Activated CD4-positive, alpha-beta T cell treated with anti-CD3 and anti-CD28 coated beads, Interleukin-2, amount 10 ng/mL, durations not matched to agents 24 days and 14 days (primary cell): ENCODE measurements at regions of chr13 and their contacts with region 1.

Region 1: GRCh38 chr13:45393941-45394570 is 24.1 kb downstream of the SLC25A30 start:
- DNase-seq: peak; percentile 71
- H3K4me3 Mint-ChIP-seq: no peak overlapping the region
- H3K27ac Mint-ChIP-seq: no peak overlapping the region
- H3K4me1 Mint-ChIP-seq: peaks cover 38% of the 10 kb centered on the region
- H3K27me3 Mint-ChIP-seq: no peaks in the 10 kb centered on the region

Region 2: GRCh38 chr13:45055198-45055901 is 338.7 kb before region 1 on chr13:
- intact Hi-C with region 1: loop called (anchors 10 kb)
- DNase-seq: peak; percentile 73
- H3K4me3 Mint-ChIP-seq: peak overlapping the region; percentile 31
- H3K27ac Mint-ChIP-seq: peak overlapping the region; percentile 57
- H3K4me1 Mint-ChIP-seq: peaks cover 18% of the 10 kb centered on the region
- H3K27me3 Mint-ChIP-seq: peaks cover 43% of the 10 kb centered on the region

Region 3: GRCh38 chr13:45332036-45332830 is 61.8 kb before region 1 on chr13:
- intact Hi-C with region 1: loop called (anchors 1 kb)
- DNase-seq: no peak
- H3K4me3 Mint-ChIP-seq: no peak overlapping the region
- H3K27ac Mint-ChIP-seq: no peak overlapping the region
- H3K4me1 Mint-ChIP-seq: peaks cover 75% of the 10 kb centered on the region
- H3K27me3 Mint-ChIP-seq: no peaks in the 10 kb centered on the region

Region 4: DNA sequence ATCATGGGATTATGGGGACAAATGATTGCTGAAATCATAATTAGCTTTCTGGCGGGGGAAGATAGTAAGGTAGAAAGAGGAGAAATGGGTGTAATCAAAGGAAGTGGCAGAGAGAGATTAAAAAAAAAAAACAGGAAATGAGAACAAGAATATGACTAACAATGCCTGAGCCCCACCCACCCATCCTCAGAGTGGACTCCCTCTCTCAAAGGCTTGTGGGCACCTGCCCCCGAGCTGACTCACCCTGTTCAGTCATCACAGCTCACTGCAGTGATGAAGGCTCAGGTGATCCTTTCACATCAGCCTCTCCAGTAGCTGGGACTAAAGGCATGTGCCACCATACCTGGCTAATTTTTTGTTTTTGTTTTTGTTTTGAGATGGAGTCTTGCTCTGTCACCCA is 26.7 kb before region 1 on chr13:
- intact Hi-C with region 1: loop called (anchors 1 kb)
- DNase-seq: peak; percentile 95
- H3K4me3 Mint-ChIP-seq: peak overlapping the region; percentile 76
- H3K27ac Mint-ChIP-seq: peak overlapping the region; percentile 95
- H3K4me1 Mint-ChIP-seq: peaks cover 54% of the 10 kb centered on the region
- H3K27me3 Mint-ChIP-seq: no peaks in the 10 kb centered on the region

Region 5: DNA sequence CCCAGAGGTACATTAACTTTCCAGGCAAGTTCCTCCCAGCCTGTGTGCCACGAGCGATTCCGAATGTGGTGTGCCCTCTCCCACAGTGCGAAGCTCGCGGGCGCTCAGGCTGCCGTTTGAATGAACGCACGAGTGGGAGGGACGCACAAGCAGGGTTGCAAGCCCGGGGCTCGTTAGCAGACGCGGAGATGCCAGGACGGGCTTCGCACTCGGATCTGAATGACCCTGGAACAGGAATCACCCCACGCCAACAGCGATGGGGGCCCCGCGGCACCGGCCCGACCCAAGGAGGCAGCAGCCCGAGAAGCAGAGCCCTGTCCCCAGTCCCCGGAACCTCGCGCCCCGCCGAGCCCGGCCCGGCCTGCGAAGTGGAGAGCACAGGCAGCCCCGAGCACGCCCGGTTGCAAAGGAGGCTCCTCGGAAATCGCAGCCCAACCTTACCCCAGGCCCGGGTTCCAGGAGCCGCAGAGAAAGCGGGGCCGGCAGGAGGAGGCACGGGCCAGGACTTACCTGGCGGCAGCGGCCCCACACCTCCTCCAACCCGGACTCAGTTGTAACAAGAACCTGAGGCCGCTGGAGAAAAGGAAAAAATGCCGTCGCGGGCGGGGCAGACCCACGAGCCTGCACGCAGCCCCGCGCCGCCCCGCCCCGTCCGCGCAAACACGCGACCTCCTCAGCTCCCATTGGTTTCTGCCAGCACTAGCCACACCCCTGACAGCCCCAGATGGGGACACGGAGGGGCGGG is 23.9 kb after region 1 on chr13 and contains the start of gene SLC25A30:
- intact Hi-C with region 1: loop called (anchors 2 kb)
- DNase-seq: peak; percentile 96
- H3K4me3 Mint-ChIP-seq: peak within 1 kb of the TSS; percentile 96
- H3K27ac Mint-ChIP-seq: peak within 1 kb of the TSS; percentile 94
- H3K4me1 Mint-ChIP-seq: peaks cover 19% of the 10 kb centered on the region
- H3K27me3 Mint-ChIP-seq: peaks cover 1% of the 10 kb centered on the region
- total RNA-seq, gene SLC25A30: 12.9 and 14.2 TPM in 2 replicates

Region 6: GRCh38 chr13:45464687-45465453 is 70.8 kb after region 1 on chr13 and contains the start of gene COG3:
- intact Hi-C with region 1: loop called (anchors 2 kb)
- DNase-seq: peak; percentile 99
- H3K4me3 Mint-ChIP-seq: peak within 1 kb of the TSS; percentile 91
- H3K27ac Mint-ChIP-seq: peak within 1 kb of the TSS; percentile 86
- H3K4me1 Mint-ChIP-seq: peaks cover 37% of the 10 kb centered on the region
- H3K27me3 Mint-ChIP-seq: peaks cover 2% of the 10 kb centered on the region
- total RNA-seq, gene COG3: 20.1 and 20.7 TPM in 2 replicates